ENCODE measurements at regions of chr7 and their contacts with region 1.

Region 1: DNA sequence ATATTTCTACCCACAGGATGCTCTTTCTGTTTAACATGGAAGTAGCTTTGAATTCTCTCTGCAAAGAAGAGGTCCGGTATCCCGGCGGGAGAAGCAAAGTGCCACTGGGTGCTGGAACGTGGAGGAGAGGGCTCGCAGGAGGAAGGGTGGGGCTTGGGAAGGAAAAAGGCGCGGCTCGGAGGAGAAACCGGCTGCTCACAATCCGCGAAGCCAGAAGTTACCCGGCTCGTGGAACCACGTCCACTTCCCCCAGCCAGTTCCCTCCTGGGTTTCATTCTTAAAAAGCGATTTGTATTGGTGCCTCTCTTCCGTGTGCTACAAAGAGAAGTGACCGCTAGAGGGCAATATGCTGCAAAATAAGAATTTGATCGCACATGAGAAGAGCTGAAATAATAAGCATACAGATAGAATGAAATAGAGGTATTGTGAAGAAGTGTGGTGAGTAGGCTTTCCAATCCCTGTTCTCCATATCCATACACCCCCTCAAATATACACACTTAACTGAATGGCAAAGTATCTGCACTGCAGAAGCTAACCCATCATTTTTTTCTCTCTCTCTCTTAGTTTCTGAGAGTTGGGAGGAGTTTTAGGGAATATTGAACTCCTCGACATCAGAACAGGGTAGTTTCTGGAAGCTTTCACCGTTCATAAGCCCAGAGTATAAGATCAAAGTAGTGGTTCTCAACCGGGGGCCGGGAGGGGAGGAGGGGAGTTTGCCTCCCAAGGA is 31.1 kb downstream of the TRIL start:
- DNase-seq: peak; percentile 57 to 64 (median 61)
- H3K4me3 ChIP-seq: peak overlapping the region; percentile 25 to 52
- H3K4me3 Mint-ChIP-seq: peak overlapping the region; percentile 87 to 97 (median 92)
- H3K27ac ChIP-seq: peak overlapping the region; percentile 22
- H3K27ac Mint-ChIP-seq: peak overlapping the region in 6 of 7 donors; percentile 7 to 85 (median 76)
- H3K4me1 ChIP-seq: peaks cover 17% of the 10 kb centered on the region
- H3K4me1 Mint-ChIP-seq: peaks cover 17 to 33% (median 28%) of the 10 kb centered on the region in 4 donors
- H3K27me3 ChIP-seq: no peaks in the 10 kb centered on the region
- H3K27me3 Mint-ChIP-seq: peaks cover 2 to 6% of the 10 kb centered on the region in 2 donors

Region 2: DNA sequence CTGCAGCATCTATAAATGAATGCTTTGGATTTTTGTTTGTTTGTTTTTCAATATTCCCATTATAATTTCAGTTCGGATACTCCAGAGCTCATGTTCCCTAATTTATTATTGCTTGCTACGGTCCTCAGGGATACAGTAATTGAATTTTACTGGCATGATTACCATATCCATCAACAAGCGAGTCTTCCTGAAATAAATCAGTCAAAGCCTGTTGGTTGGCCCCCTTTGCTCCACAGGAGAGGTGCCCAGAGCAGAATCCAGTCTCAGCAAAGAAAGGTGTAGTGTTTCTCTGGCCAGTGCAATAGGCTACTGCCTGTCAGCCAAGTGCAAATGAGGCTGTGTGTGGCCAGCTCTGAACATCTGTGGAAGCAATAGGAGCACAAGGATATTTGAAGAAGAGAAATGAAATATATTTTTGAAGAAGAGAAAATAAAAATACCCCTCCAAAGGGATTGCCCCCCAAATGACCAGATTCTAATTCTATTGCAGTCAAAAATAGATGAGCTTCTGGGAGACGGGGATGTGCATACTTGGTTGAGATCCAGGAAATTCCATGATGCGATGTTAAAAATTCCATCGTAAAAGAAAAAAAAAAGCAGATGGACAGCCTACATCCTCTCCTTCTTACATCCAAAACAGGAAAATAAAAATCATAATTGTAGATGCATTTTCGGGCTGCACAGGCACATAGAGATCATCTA is 13.0 kb after region 1 on chr7:
- CTCF ChIA-PET with region 1: interaction called, 212 read pairs
- POLR2A ChIA-PET with region 1: no interaction called
- intact Hi-C with region 1: no loop called
- DNase-seq: no peak
- H3K4me3 ChIP-seq: no peak overlapping the region
- H3K4me3 Mint-ChIP-seq: no peak overlapping the region
- H3K27ac ChIP-seq: no peak overlapping the region
- H3K27ac Mint-ChIP-seq: no peak overlapping the region
- H3K4me1 ChIP-seq: no peaks in the 10 kb centered on the region
- H3K4me1 Mint-ChIP-seq: no peaks in the 10 kb centered on the region
- H3K27me3 ChIP-seq: no peaks in the 10 kb centered on the region
- H3K27me3 Mint-ChIP-seq: peaks cover 19 to 23% of the 10 kb centered on the region in 2 donors

Region 3: DNA sequence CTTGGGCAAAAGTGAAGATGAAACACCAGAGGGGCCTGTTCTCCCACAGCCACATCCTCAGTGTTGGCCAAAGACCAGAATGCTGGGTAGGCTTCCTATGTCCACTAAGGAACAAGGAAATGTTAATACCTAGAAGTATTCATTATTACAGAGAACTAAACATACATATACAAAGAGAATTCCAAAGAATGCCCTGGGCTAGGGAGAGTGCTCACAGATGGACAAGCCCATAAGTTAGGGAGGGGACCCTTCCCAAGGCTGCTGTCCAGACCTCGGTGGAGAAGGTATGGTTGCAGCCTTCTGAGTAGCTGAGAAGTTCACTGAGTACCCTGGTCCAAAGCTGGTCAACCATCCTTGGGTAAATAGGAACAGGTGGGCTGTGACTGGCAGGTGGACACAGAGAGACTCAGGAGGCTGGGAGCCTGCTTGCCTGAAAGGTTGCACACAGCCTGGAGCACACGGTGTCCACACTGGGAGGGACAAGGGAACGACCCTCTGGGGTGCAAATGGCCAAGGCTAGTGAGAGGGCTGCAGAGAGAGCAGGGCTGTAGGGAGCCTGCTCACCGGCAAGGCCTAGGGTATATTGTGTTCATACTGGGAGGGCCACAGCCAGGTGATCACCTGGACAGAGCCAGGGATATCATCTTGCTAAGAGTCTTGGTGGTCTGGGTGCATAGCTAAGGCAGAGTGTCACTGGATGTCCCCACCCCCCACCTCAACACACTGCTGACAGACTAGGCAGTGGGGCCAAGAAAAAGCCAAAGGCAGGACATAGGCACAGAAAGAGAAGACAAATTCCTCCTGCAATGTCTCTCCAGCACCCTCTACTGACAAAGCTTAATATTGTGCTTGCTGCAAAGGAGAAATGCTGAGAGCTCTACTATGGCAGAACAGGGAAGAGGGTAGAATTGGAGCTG is 179.0 kb after region 1 on chr7:
- CTCF ChIA-PET with region 1: interaction called, 12 read pairs
- POLR2A ChIA-PET with region 1: no interaction called
- intact Hi-C with region 1: loop called (anchors 1 kb)
- DNase-seq: peak in 1 of 5 donors; percentile 3
- H3K4me3 ChIP-seq: no peak overlapping the region
- H3K4me3 Mint-ChIP-seq: no peak overlapping the region
- H3K27ac ChIP-seq: no peak overlapping the region
- H3K27ac Mint-ChIP-seq: peak overlapping the region in 1 of 7 donors; percentile 53
- H3K4me1 ChIP-seq: no peaks in the 10 kb centered on the region
- H3K4me1 Mint-ChIP-seq: peaks cover 0 to 3% (median 0%) of the 10 kb centered on the region in 4 donors
- H3K27me3 ChIP-seq: no peaks in the 10 kb centered on the region
- H3K27me3 Mint-ChIP-seq: peaks cover 0 to 6% of the 10 kb centered on the region in 2 donors